CD14-positive monocyte (primary cell): ENCODE measurements at regions of chr6 and their contacts with region 1.

Region 1: DNA sequence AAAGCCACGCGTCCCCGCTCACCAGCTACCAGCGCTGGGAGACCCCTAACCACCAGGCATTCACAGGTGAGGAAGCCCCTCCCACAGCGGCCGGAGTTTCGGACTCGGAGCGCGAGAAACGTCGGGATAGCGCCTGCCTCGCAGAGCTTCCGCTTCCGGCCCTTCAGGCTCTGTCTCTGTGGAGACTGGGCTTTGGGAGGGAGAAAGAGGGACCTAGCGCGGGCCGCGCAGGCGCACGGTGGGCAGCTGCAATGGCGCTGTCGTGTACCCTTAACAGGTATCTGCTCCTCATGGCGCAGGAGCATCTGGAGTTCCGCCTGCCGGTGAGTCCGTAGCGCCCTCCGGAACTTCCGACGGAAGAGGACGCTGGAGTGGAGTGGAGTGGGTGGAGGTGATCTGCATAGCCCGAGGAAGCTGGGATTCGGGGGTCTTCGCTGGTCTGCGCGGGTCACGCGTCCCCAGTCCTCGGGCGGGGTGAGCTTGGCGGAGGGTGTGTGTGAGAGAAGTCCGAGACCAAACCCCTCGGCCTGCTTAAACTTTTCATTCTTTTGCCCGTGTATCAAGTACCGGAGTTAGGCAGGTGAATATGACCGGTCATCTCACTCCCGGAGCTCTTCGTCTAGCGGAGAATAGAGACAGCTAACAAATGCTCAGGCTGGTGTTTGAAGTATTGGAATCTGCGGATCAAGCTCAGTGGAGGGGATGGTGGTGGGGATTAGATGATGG is at the start of gene TRMT11:
- DNase-seq: peak; percentile 56 to 74 (median 71)
- H3K4me3 ChIP-seq: peak within 1 kb of the TSS; percentile 87 to 88 (median 88)
- H3K4me3 Mint-ChIP-seq: no peak within 1 kb of the TSS
- H3K27ac ChIP-seq: peak within 1 kb of the TSS in 1 of 2 donors; percentile 56
- H3K27ac Mint-ChIP-seq: peak within 1 kb of the TSS in 1 of 7 donors; percentile 25
- H3K4me1 ChIP-seq: peaks cover 15 to 16% of the 10 kb centered on the region in 2 donors
- H3K4me1 Mint-ChIP-seq: peaks cover 8% of the 10 kb centered on the region
- H3K27me3 ChIP-seq: no peaks in the 10 kb centered on the region
- H3K27me3 Mint-ChIP-seq: no peaks in the 10 kb centered on the region
- CTCF ChIP-seq: no peak
- polyA plus RNA-seq, gene TRMT11: 2.1 to 3.3 (median 2.1) TPM

Region 2: GRCh38 chr6:125944434-125944816 is 42.0 kb before region 1 on chr6:
- intact Hi-C with region 1: no loop called
- DNase-seq: peak; percentile 32 to 72 (median 42)
- H3K4me3 ChIP-seq: peak overlapping the region in 2 of 3 experiments; percentile 10 to 46
- H3K4me3 Mint-ChIP-seq: peak overlapping the region in 1 of 2 donors; percentile 72
- H3K27ac ChIP-seq: peak overlapping the region in 1 of 2 donors; percentile 71
- H3K27ac Mint-ChIP-seq: peak overlapping the region in 6 of 7 donors; percentile 25 to 64 (median 57)
- H3K4me1 ChIP-seq: peaks cover 8 to 21% of the 10 kb centered on the region in 2 donors
- H3K4me1 Mint-ChIP-seq: peaks cover 34% of the 10 kb centered on the region
- H3K27me3 ChIP-seq: no peaks in the 10 kb centered on the region
- H3K27me3 Mint-ChIP-seq: no peaks in the 10 kb centered on the region
- CTCF ChIP-seq: no peak

Region 3: GRCh38 chr6:127111526-127111925 is 1125.1 kb after region 1 on chr6:
- intact Hi-C with region 1: loop called (anchors 5 to 10 kb)
- DNase-seq: no peak
- H3K4me3 ChIP-seq: no peak overlapping the region
- H3K4me3 Mint-ChIP-seq: no peak overlapping the region
- H3K27ac ChIP-seq: no peak overlapping the region
- H3K27ac Mint-ChIP-seq: peak overlapping the region in 2 of 7 donors; percentile 38 to 39
- H3K4me1 ChIP-seq: peaks cover 22 to 34% of the 10 kb centered on the region in 2 donors
- H3K4me1 Mint-ChIP-seq: peaks cover 28% of the 10 kb centered on the region
- H3K27me3 ChIP-seq: peaks cover 22 to 26% of the 10 kb centered on the region in 2 donors
- H3K27me3 Mint-ChIP-seq: peaks cover 21 to 27% (median 23%) of the 10 kb centered on the region in 3 donors
- CTCF ChIP-seq: no peak